Cardiac septum (tissue), 1 donor: ENCODE measurements at regions of chr14 and their contacts with region 1.

Region 1: DNA sequence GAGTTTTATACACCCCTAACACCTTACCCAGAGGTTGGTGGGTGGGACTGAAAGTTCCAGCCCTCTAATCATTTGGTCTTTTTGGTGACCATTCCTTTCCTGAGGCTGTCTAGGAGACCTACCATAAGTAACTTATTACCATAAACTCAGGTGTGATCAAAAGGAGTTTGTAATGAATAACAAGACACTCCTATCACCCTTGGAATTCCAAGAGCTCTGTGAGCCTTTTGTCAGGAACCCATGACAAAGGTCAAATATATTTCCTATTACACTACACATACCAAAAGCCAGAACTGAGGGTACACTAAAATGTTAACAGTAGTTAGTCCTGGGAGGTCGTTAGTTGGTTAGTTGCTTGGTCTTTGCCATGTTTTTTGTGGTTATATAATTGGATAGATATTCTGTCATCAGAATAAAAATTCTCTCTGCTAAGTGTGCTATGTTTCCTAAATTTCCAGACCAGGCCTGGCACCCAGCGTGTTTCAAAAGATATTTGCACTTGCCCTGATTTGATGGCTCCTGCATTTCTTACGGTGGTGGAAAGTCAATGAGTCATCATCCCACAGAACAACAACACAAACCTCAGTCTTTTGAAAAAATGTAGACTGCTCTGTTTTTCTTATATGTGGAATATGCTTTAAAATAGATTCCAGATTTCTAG is 27.0 kb upstream of the AKAP5 start:
- DNase-seq: no peak

Region 2: DNA sequence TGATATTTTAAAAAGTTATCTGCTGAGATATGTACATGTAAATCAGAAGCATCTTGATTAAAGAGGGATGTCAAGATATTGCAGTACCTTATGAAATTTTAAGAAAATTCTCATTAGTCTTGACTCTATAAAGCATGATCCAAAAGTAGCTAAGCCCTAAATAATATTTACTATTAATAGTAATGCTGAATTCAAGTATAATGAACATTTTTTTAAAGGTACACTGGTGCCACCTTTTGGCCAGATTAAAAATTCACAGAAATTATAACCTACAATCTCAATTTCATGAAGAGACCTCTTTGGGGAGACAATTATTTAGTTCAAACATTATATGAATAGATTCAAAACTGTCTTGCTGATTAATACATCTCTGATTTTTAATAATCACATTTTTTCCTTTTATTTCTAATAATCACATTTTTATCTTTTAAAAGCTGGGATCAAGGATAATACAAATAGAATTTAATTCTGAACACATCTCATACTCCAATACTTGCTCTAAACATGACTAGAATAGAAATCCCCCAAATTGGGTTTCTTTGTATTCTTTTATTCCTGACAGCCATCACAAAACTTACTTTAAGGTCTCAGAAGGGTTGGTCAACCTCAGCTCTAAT is 40.4 kb after region 1 on chr14:
- intact Hi-C with region 1: loop called (anchors 5 kb)
- DNase-seq: no peak